Adrenal gland (tissue), 19 donors: ENCODE measurements at regions of chr1 and their contacts with region 1.

Region 1: DNA sequence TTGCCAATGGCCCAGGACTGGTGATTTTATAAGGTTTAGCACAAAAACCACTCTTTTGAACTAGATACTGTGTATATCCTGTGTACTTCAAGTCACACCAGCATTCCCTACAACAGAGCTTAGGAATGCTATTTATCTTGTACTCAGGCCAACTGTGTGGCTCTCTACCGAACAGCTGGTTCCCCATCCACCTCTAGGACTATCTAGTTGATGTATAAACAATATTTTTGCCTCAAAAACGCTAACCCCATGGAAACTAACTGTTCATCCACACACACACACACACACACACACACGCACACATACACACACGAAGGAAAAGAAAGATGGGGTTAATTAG is 28.7 kb upstream of the SLC45A3 start:
- DNase-seq: no peak
- H3K4me3 ChIP-seq: no peak overlapping the region
- H3K27ac ChIP-seq: peak overlapping the region in 1 of 5 donors; percentile 2
- H3K4me1 ChIP-seq: peaks cover 0 to 24% of the 10 kb centered on the region in 2 donors
- H3K27me3 ChIP-seq: no peaks in the 10 kb centered on the region
- CTCF ChIP-seq: no peak
- POLR2A ChIP-seq: no peak

Region 2: DNA sequence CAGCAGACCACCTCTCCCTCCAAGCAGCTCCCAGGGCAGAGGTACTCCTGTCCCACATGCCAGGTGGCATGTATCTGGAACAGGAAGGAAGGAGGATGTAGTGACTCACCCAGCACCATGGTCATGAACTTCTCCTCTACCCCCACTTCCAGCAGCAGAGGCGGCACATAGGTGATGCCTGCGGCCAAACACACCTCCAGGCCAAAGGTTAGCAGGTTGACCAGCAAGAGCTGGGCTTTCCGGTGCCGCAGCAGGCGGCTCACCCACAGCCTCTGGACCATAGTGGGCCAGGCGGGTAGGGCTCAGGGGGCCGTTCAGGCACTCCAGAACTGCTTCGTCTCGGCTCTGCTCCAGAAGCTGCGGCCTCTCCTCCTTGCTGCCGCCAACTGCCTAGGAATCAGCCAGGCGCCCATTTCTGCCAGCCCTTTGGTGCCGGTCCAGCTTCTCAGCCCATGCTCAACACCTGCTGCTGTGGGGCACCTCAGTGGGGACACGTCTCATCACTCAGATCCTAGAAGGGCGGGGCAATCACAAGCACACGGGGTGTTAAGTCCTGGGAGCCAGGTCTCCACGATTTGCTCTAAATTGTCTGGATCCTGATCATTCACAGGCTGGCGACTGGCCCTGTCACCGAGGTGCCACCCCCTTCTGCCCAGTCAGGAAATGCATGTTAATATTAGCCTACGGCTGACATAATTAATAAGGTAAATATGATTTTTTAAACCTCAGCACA is 44.5 kb before region 1 on chr1:
- intact Hi-C with region 1: loop called (anchors 5 kb)
- DNase-seq: no peak
- H3K4me3 ChIP-seq: no peak overlapping the region
- H3K27ac ChIP-seq: no peak overlapping the region
- H3K4me1 ChIP-seq: peaks cover 0 to 6% of the 10 kb centered on the region in 2 donors
- H3K27me3 ChIP-seq: no peaks in the 10 kb centered on the region
- CTCF ChIP-seq: no peak
- POLR2A ChIP-seq: no peak